Gastrocnemius medialis (tissue), 4 donors: ENCODE measurements at regions of chr4 and their contacts with region 1.

Region 1: GRCh38 chr4:145154573-145154972 is 25.8 kb downstream of the OTUD4 start:
- DNase-seq: no peak
- ATAC-seq: peak; percentile 66 to 82
- H3K4me3 ChIP-seq: no peak overlapping the region
- H3K27ac ChIP-seq: peak overlapping the region; percentile 65 to 73 (median 68)
- H3K4me1 ChIP-seq: peaks cover 13 to 22% of the 10 kb centered on the region in 2 donors
- H3K27me3 ChIP-seq: no peaks in the 10 kb centered on the region
- CTCF ChIP-seq: peak; percentile 25 to 70 (median 36)
- POLR2A ChIP-seq: no peak

Region 2: GRCh38 chr4:144861471-144861870 is 293.1 kb before region 1 on chr4:
- in situ Hi-C with region 1: no loop called
- intact Hi-C with region 1: no loop called
- DNase-seq: no peak
- ATAC-seq: no peak
- H3K4me3 ChIP-seq: peak overlapping the region in 1 of 4 donors; percentile 16
- H3K27ac ChIP-seq: no peak overlapping the region
- H3K4me1 ChIP-seq: peaks cover 0 to 4% of the 10 kb centered on the region in 2 donors
- H3K27me3 ChIP-seq: no peaks in the 10 kb centered on the region
- CTCF ChIP-seq: no peak
- POLR2A ChIP-seq: no peak

Region 3: GRCh38 chr4:145216535-145216934 is 62.0 kb after region 1 on chr4:
- in situ Hi-C with region 1: no loop called
- intact Hi-C with region 1: loop called (anchors 5 kb)
- DNase-seq: no peak
- ATAC-seq: no peak
- H3K4me3 ChIP-seq: no peak overlapping the region
- H3K27ac ChIP-seq: no peak overlapping the region
- H3K4me1 ChIP-seq: peaks cover 0 to 6% of the 10 kb centered on the region in 2 donors
- H3K27me3 ChIP-seq: no peaks in the 10 kb centered on the region
- CTCF ChIP-seq: peak in 3 of 5 experiments; percentile 29 to 43 (median 35)
- POLR2A ChIP-seq: no peak

Region 4: DNA sequence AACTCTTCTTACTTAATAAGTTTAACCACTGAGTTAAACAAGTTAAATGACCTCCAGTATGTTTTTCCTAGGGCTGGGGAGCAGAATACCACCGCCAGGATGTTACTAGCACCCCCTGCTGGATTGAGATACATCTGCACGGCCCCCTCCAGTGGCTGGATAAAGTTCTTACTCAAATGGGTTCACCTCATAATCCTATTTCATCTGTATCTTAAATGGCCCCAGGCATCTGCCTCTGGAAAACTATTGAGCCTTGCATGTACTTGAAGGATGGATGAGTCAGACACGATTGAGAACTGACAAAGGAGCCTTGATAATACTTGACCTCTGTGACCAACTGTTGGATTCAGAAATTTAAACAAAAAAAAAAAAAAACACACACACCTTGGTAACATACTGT is 403.1 kb after region 1 on chr4:
- in situ Hi-C with region 1: no loop called
- intact Hi-C with region 1: loop called (anchors 1 kb)
- DNase-seq: peak in 1 of 2 donors; percentile 52
- ATAC-seq: peak; percentile 42 to 81
- H3K4me3 ChIP-seq: no peak overlapping the region
- H3K27ac ChIP-seq: no peak overlapping the region
- H3K4me1 ChIP-seq: no peaks in the 10 kb centered on the region
- H3K27me3 ChIP-seq: no peaks in the 10 kb centered on the region
- CTCF ChIP-seq: peak; percentile 76 to 88 (median 77)
- POLR2A ChIP-seq: no peak